B cell (primary cell): ENCODE measurements at regions of chr2 and their contacts with region 1.

Region 1: DNA sequence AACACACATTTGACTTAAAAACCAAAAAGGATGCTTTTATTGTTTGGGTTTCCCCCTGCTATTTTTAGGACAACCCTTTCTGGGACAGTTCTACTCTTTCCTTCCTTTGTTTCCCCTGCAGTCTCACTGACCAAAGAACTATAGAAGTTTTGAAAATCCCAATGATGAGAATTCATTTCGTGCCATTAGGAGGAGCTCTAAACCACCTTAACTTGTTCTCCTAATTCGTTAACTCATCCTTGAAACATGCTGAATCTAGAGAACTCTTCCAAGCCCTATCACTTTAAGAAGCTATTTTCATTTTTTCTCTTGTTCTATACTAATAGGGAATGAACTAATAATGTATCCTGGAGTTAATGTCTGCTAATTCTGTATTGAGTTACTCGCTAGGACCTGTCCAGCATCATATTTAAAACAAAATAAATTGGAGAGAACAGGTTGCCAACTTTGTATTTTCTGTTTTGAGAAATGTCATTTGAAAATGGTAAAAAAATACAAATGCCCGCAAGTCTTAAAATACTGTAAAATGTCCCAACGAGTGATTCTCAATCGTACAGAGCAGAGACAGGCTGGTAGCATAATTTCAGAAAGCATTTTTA is 62.9 kb downstream of the AFTPH start:
- DNase-seq: peak; percentile 72
- ATAC-seq: peak; percentile 58
- H3K4me3 ChIP-seq: no peak overlapping the region
- H3K4me3 Mint-ChIP-seq: no peak overlapping the region
- H3K27ac ChIP-seq: no peak overlapping the region
- H3K27ac Mint-ChIP-seq: peak overlapping the region; percentile 32
- H3K4me1 ChIP-seq: peaks cover 0 to 4% of the 10 kb centered on the region in 2 donors
- H3K4me1 Mint-ChIP-seq: peaks cover 14% of the 10 kb centered on the region
- H3K27me3 ChIP-seq: no peaks in the 10 kb centered on the region
- H3K27me3 Mint-ChIP-seq: no peaks in the 10 kb centered on the region
- CTCF ChIP-seq: peak; percentile 88

Region 2: DNA sequence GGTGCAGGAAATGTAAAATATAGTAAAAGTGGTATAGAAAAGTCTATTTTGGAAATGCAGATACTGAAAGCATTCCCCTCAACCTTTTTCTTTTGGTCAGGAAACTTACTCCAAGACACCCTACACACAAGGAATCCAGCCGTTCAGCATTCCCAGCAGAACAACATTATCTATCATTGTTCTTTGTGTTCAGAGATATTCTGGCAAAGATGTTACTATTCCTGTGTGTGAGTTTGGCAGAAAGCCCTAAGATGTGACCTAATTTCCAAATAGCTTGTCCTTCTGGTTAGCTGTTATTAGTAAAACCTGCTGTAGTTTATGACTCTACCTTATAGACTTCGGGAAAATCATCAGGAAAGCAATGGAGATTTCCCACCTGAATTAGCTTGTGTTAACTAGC is 364.6 kb before region 1 on chr2:
- CTCF ChIA-PET with region 1: no interaction called
- POLR2A ChIA-PET with region 1: no interaction called
- intact Hi-C with region 1: no loop called
- DNase-seq: no peak
- ATAC-seq: no peak
- H3K4me3 ChIP-seq: peak overlapping the region in 1 of 5 experiments; percentile 38
- H3K4me3 Mint-ChIP-seq: no peak overlapping the region
- H3K27ac ChIP-seq: peak overlapping the region in 1 of 2 donors; percentile 82
- H3K27ac Mint-ChIP-seq: peak overlapping the region; percentile 92
- H3K4me1 ChIP-seq: peaks cover 43 to 45% of the 10 kb centered on the region in 2 donors
- H3K4me1 Mint-ChIP-seq: peaks cover 57% of the 10 kb centered on the region
- H3K27me3 ChIP-seq: no peaks in the 10 kb centered on the region
- H3K27me3 Mint-ChIP-seq: no peaks in the 10 kb centered on the region
- CTCF ChIP-seq: no peak

Region 3: GRCh38 chr2:64635976-64636911 is 49.3 kb after region 1 on chr2:
- CTCF ChIA-PET with region 1: interaction called, 3 read pairs
- POLR2A ChIA-PET with region 1: no interaction called
- intact Hi-C with region 1: loop called (anchors 5 kb)
- DNase-seq: peak; percentile 75
- ATAC-seq: peak; percentile 50
- H3K4me3 ChIP-seq: peak overlapping the region in 3 of 5 experiments; percentile 13 to 43 (median 28)
- H3K4me3 Mint-ChIP-seq: peak overlapping the region; percentile 84
- H3K27ac ChIP-seq: peak overlapping the region; percentile 80 to 93
- H3K27ac Mint-ChIP-seq: peak overlapping the region; percentile 97
- H3K4me1 ChIP-seq: peaks cover 67 to 69% of the 10 kb centered on the region in 2 donors
- H3K4me1 Mint-ChIP-seq: peaks cover 70% of the 10 kb centered on the region
- H3K27me3 ChIP-seq: no peaks in the 10 kb centered on the region
- H3K27me3 Mint-ChIP-seq: no peaks in the 10 kb centered on the region
- CTCF ChIP-seq: no peak

Region 4: DNA sequence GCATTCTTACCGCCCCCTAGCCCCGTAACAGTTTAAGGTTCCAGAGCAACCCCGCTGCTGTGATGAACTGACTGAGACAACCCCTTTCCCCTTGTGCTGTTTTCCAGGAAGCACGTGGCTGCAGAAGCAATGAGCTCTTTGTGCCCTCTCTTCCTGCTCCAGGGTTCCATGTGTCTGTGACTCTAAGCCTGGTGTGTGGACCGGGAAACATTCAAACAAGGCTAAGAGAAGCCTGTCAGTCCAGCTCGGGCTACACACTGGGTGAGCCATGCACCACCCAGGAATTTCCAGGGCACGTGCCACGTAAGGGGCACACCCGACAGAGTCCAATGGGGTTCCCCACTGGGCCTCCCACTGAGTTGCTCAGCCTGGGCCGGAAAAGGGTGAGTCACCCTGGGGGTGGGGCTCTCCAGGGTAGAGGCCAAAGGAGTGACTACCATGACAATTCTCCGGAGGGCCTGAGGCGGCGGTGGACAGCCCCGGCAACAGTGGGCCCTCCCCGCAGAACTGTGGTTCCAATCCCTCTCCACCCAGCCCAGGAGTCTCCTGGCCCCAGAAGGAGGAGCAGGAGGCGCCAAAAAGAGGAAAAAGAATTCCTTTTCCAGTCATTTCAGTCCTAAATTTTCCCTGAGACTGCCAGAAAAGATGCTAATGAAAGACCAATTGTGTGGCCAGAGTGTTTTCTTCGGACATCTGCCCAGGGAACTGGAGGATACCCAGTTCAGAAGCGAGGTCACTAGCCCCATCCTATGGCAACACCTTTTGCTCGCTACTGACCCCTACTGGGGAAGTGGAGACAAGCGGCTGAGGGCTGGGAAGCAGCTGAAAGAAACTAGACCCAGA is 244.4 kb after region 1 on chr2:
- CTCF ChIA-PET with region 1: interaction called, 15 read pairs
- POLR2A ChIA-PET with region 1: no interaction called
- intact Hi-C with region 1: no loop called
- DNase-seq: peak; percentile 82
- ATAC-seq: peak; percentile 91
- H3K4me3 ChIP-seq: peak overlapping the region in 3 of 5 experiments; percentile 11 to 38 (median 16)
- H3K4me3 Mint-ChIP-seq: peak overlapping the region; percentile 63
- H3K27ac ChIP-seq: no peak overlapping the region
- H3K27ac Mint-ChIP-seq: peak overlapping the region; percentile 77
- H3K4me1 ChIP-seq: peaks cover 8 to 12% of the 10 kb centered on the region in 2 donors
- H3K4me1 Mint-ChIP-seq: peaks cover 13% of the 10 kb centered on the region
- H3K27me3 ChIP-seq: no peaks in the 10 kb centered on the region
- H3K27me3 Mint-ChIP-seq: no peaks in the 10 kb centered on the region
- CTCF ChIP-seq: peak; percentile 96

Region 5: GRCh38 chr2:64865073-64865830 is 278.3 kb after region 1 on chr2:
- CTCF ChIA-PET with region 1: interaction called, 41 read pairs
- POLR2A ChIA-PET with region 1: interaction called, 5 read pairs
- intact Hi-C with region 1: loop called (anchors 1 kb)
- DNase-seq: peak; percentile 86
- ATAC-seq: peak; percentile 54
- H3K4me3 ChIP-seq: peak overlapping the region; percentile 46 to 88 (median 64)
- H3K4me3 Mint-ChIP-seq: no peak overlapping the region
- H3K27ac ChIP-seq: peak overlapping the region; percentile 91 to 93
- H3K27ac Mint-ChIP-seq: peak overlapping the region; percentile 53
- H3K4me1 ChIP-seq: peaks cover 49 to 60% of the 10 kb centered on the region in 2 donors
- H3K4me1 Mint-ChIP-seq: peaks cover 1% of the 10 kb centered on the region
- H3K27me3 ChIP-seq: no peaks in the 10 kb centered on the region
- H3K27me3 Mint-ChIP-seq: no peaks in the 10 kb centered on the region
- CTCF ChIP-seq: peak; percentile 85

Region 6: DNA sequence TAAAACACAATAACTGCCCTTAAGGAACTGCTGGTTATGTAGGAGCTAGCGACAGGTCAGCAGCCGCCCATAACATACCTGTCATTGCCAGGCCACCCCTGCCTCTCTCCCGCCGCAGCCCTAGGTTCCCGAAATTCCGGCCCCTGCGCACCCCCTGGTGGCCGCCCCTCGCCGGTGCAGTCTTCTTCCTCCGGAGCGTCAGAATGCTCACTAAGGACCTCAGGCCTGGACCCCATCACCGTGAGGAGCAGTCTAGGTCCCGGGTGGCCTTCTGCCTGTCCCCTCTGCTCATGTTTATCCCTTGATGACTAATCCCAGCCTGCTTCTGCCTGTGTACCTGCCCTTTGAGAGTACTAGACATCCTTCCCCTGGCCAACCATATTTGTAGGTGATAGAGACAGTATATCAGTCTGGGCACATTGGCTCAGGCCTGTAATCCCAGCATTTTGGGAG is 286.5 kb after region 1 on chr2:
- CTCF ChIA-PET with region 1: interaction called, 41 read pairs
- POLR2A ChIA-PET with region 1: no interaction called
- intact Hi-C with region 1: loop called (anchors 1 kb)
- DNase-seq: peak; percentile 87
- ATAC-seq: peak; percentile 99
- H3K4me3 ChIP-seq: peak overlapping the region in 3 of 5 experiments; percentile 11 to 35 (median 29)
- H3K4me3 Mint-ChIP-seq: peak overlapping the region; percentile 67
- H3K27ac ChIP-seq: no peak overlapping the region
- H3K27ac Mint-ChIP-seq: no peak overlapping the region
- H3K4me1 ChIP-seq: peaks cover 7 to 9% of the 10 kb centered on the region in 2 donors
- H3K4me1 Mint-ChIP-seq: peaks cover 7% of the 10 kb centered on the region
- H3K27me3 ChIP-seq: no peaks in the 10 kb centered on the region
- H3K27me3 Mint-ChIP-seq: no peaks in the 10 kb centered on the region
- CTCF ChIP-seq: peak; percentile 93